Natural killer cell (primary cell): ENCODE measurements at regions of chr17 and their contacts with region 1.

Region 1: DNA sequence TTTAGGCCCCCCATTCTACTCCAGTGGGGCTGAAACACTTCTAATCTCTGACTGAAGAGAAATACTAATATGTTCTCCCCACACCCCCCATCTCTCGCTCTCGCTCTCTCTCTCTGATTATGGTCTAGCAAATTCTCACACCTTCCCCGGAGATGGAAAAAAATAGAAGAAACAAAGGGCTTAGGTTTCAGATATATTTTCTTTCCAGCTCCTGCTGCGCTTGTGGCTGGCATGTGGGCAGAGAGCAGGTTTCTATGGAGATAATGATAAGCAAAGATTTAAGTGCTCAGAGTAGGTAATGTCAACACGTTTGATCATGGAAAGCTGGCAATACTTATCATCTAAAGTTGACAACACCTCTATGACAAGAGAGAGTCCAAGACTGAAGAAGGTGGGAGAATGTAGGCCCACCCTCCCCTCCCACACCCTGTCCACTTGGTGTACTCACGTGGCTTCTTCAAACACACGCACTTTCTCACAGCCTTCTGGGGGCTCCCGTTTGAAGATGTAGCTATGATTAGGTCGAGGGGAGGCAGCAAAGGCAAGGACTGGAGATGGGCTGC is 8.0 kb upstream of the SLC35B1 start:
- DNase-seq: peak; percentile 65 to 84
- ATAC-seq: peak; percentile 61 to 78 (median 71)
- H3K4me3 ChIP-seq: no peak overlapping the region
- H3K4me3 Mint-ChIP-seq: peak overlapping the region; percentile 76
- H3K27ac ChIP-seq: peak overlapping the region; percentile 89
- H3K27ac Mint-ChIP-seq: peak overlapping the region; percentile 97 to 98
- H3K4me1 ChIP-seq: peaks cover 64% of the 10 kb centered on the region
- H3K4me1 Mint-ChIP-seq: peaks cover 55 to 60% of the 10 kb centered on the region in 2 donors
- H3K27me3 ChIP-seq: no peaks in the 10 kb centered on the region
- H3K27me3 Mint-ChIP-seq: no peaks in the 10 kb centered on the region
- CTCF ChIP-seq: no peak

Region 2: GRCh38 chr17:48985436-48986245 is 730.2 kb before region 1 on chr17:
- intact Hi-C with region 1: no loop called
- DNase-seq: no peak
- ATAC-seq: no peak
- H3K4me3 ChIP-seq: no peak overlapping the region
- H3K4me3 Mint-ChIP-seq: no peak overlapping the region
- H3K27ac ChIP-seq: no peak overlapping the region
- H3K27ac Mint-ChIP-seq: no peak overlapping the region
- H3K4me1 ChIP-seq: no peaks in the 10 kb centered on the region
- H3K4me1 Mint-ChIP-seq: no peaks in the 10 kb centered on the region
- H3K27me3 ChIP-seq: peaks cover 10% of the 10 kb centered on the region
- H3K27me3 Mint-ChIP-seq: peaks cover 28 to 42% of the 10 kb centered on the region in 2 donors
- CTCF ChIP-seq: no peak

Region 3: GRCh38 chr17:49677933-49678847 is 37.6 kb before region 1 on chr17 and contains the start of gene SPOP:
- intact Hi-C with region 1: loop called (anchors 1 kb)
- DNase-seq: peak; percentile 96 to 100
- ATAC-seq: peak; percentile 92 to 99 (median 93)
- H3K4me3 ChIP-seq: peak within 1 kb of the TSS; percentile 88
- H3K4me3 Mint-ChIP-seq: peak within 1 kb of the TSS; percentile 97
- H3K27ac ChIP-seq: peak within 1 kb of the TSS; percentile 99
- H3K27ac Mint-ChIP-seq: peak within 1 kb of the TSS; percentile 97 to 98
- H3K4me1 ChIP-seq: peaks cover 18% of the 10 kb centered on the region
- H3K4me1 Mint-ChIP-seq: peaks cover 43 to 45% of the 10 kb centered on the region in 2 donors
- H3K27me3 ChIP-seq: no peaks in the 10 kb centered on the region
- H3K27me3 Mint-ChIP-seq: peaks cover 0 to 2% of the 10 kb centered on the region in 2 donors
- CTCF ChIP-seq: no peak
- total RNA-seq, gene SPOP: 45.4 to 56.5 (median 54.7) TPM

Region 4: GRCh38 chr17:49739641-49740271 is 24.0 kb after region 1 on chr17:
- intact Hi-C with region 1: loop called (anchors 1 kb)
- DNase-seq: peak; percentile 94 to 100
- ATAC-seq: peak; percentile 88 to 99 (median 95)
- H3K4me3 ChIP-seq: peak overlapping the region; percentile 34
- H3K4me3 Mint-ChIP-seq: peak overlapping the region; percentile 94
- H3K27ac ChIP-seq: peak overlapping the region; percentile 94
- H3K27ac Mint-ChIP-seq: peak overlapping the region; percentile 99 to 100
- H3K4me1 ChIP-seq: peaks cover 92% of the 10 kb centered on the region
- H3K4me1 Mint-ChIP-seq: peaks cover 84 to 87% of the 10 kb centered on the region in 2 donors
- H3K27me3 ChIP-seq: no peaks in the 10 kb centered on the region
- H3K27me3 Mint-ChIP-seq: no peaks in the 10 kb centered on the region
- CTCF ChIP-seq: no peak

Region 5: DNA sequence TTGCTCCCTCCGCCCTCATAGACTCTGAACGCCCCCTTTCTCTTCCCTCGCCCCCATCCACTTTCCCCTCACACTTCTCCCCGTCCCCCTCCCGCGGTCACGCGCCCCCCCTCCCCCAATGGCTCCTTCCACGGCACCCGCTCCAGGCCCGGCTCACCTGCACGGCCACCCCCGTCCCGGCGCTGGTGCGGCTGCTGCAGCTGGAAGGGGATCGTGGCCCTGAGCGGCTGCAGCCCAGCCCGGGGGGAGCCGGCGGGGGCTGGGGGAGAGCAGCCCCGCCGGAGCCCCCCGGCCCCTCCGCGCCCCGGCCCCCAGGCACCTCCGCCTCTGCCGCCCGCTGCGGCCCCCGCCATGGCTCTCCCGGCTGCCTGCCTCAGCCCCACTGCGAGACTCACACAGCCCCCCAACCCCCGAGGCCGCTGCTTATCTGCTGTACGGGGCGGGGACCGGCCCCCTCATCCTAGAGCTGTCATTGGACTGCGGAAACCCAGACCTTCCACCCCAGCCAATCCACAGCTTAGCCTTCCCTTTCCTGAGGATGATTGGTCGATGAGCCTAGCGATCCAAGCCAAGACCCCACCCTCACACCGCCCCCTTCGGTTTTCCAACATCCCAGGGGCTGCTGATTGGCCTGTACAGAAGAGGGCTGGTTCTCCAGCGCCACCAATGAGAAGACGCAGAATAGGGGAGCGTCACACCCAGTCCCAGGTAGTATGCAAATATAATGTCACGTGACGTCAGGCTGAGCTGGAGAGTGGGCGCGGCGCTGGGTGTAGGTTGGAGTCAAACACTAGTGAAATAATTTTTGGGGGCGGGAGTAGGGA is 48.1 kb after region 1 on chr17 and contains the start of gene FAM117A:
- intact Hi-C with region 1: loop called (anchors 1 kb)
- DNase-seq: peak; percentile 85 to 98
- ATAC-seq: peak; percentile 80 to 93 (median 85)
- H3K4me3 ChIP-seq: peak within 1 kb of the TSS; percentile 59
- H3K4me3 Mint-ChIP-seq: peak within 1 kb of the TSS; percentile 98
- H3K27ac ChIP-seq: peak within 1 kb of the TSS; percentile 61
- H3K27ac Mint-ChIP-seq: peak within 1 kb of the TSS; percentile 95 to 97
- H3K4me1 ChIP-seq: peaks cover 35% of the 10 kb centered on the region
- H3K4me1 Mint-ChIP-seq: peaks cover 54 to 64% of the 10 kb centered on the region in 2 donors
- H3K27me3 ChIP-seq: no peaks in the 10 kb centered on the region
- H3K27me3 Mint-ChIP-seq: no peaks in the 10 kb centered on the region
- CTCF ChIP-seq: no peak
- total RNA-seq, gene FAM117A: 55.2 to 88.4 (median 79.2) TPM

Region 6: DNA sequence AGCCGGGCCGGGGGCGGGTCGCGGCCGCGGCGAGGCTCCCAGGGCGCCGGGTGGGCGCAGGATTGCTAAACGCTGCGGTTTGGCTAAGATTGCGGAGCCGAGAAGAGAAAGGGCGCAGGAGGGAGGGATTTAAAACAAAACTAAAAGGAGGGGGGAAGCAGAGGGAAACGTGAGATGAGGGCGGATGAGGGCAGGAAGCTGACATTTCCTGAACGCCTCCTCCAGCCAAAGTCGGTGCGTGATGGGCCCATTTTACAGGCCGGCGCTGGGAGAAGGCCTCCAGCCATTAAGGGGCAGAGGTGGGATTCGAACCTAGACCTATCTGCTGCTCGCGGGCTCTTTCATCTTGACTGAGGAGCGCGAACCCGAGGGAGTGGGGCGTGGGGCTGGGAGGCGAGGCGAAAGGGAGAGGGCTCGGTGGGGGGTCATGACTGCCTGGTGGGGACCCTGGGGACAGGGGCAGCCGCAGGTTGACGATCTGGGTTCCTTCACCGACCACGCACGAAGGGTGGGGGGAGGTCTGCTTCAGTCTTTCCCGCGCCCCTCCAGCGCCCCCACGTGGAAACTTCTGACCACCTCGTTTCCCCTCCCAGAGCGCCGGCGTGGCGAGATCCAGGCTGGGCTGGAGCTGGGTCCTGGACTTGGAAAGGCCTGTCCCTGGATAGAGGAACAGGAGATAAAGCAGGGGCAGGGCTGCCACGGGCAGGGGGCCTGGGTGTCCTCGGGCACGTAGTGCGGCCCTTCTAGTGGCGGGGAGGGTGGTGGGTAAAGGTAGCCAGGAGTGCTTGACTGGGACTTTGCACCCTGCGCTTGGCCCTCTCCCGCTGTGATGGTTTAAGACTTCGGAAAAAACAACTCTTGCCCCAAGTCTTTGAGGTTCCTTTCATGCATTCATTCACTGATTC is 135.8 kb after region 1 on chr17:
- intact Hi-C with region 1: loop called (anchors 5 kb)
- DNase-seq: peak; percentile 68 to 83
- ATAC-seq: peak; percentile 75 to 81 (median 79)
- H3K4me3 ChIP-seq: peak overlapping the region; percentile 70
- H3K4me3 Mint-ChIP-seq: peak overlapping the region; percentile 91
- H3K27ac ChIP-seq: peak overlapping the region; percentile 54
- H3K27ac Mint-ChIP-seq: peak overlapping the region; percentile 77 to 93
- H3K4me1 ChIP-seq: peaks cover 18% of the 10 kb centered on the region
- H3K4me1 Mint-ChIP-seq: peaks cover 12 to 16% of the 10 kb centered on the region in 2 donors
- H3K27me3 ChIP-seq: no peaks in the 10 kb centered on the region
- H3K27me3 Mint-ChIP-seq: no peaks in the 10 kb centered on the region
- CTCF ChIP-seq: peak; percentile 74

Region 7: GRCh38 chr17:49980703-49981197 is 265.0 kb after region 1 on chr17:
- intact Hi-C with region 1: no loop called
- DNase-seq: no peak
- ATAC-seq: no peak
- H3K4me3 ChIP-seq: no peak overlapping the region
- H3K4me3 Mint-ChIP-seq: no peak overlapping the region
- H3K27ac ChIP-seq: no peak overlapping the region
- H3K27ac Mint-ChIP-seq: no peak overlapping the region
- H3K4me1 ChIP-seq: no peaks in the 10 kb centered on the region
- H3K4me1 Mint-ChIP-seq: no peaks in the 10 kb centered on the region
- H3K27me3 ChIP-seq: peaks cover 5% of the 10 kb centered on the region
- H3K27me3 Mint-ChIP-seq: peaks cover 42 to 48% of the 10 kb centered on the region in 2 donors
- CTCF ChIP-seq: no peak